Activated naive CD4-positive, alpha-beta T cell treated with anti-CD3 and anti-CD28 coated beads for 36 hours (primary cell): ENCODE measurements at regions of chr12 and their contacts with region 1.

Region 1: GRCh38 chr12:76037130-76038103 is 5.8 kb upstream of the PHLDA1 start:
- DNase-seq: peak; percentile 30
- H3K4me3 Mint-ChIP-seq: no peak overlapping the region
- H3K27ac Mint-ChIP-seq: no peak overlapping the region
- H3K4me1 Mint-ChIP-seq: peaks cover 18% of the 10 kb centered on the region
- H3K27me3 Mint-ChIP-seq: no peaks in the 10 kb centered on the region

Region 2: DNA sequence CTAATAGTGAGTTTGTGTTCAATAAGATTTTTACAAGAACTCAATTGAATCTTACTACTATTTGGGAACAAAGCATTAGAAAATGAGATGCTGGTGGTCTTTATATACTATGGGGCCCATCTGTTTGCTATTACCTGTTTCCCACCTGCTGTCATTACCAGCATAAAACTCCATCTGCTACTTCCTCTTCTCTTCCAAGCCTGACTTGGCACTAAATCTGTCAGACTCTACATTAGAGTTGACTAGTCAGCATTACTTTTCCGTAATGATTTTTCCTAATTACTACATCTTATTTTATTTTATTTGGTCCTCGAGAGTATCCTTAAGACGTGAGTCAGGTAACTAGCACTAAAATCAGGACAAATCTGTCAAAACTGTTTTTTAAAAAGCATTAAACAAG is 457.9 kb before region 1 on chr12:
- CTCF ChIA-PET with region 1: interaction called, 3 read pairs
- intact Hi-C with region 1: loop called (anchors 5 kb)
- DNase-seq: no peak
- H3K4me3 Mint-ChIP-seq: no peak overlapping the region
- H3K27ac Mint-ChIP-seq: no peak overlapping the region
- H3K4me1 Mint-ChIP-seq: no peaks in the 10 kb centered on the region
- H3K27me3 Mint-ChIP-seq: peaks cover 3% of the 10 kb centered on the region

Region 3: GRCh38 chr12:75814851-75815754 is 222.3 kb before region 1 on chr12:
- CTCF ChIA-PET with region 1: interaction called, 15 read pairs
- intact Hi-C with region 1: loop called (anchors 1 kb)
- DNase-seq: no peak
- H3K4me3 Mint-ChIP-seq: no peak overlapping the region
- H3K27ac Mint-ChIP-seq: no peak overlapping the region
- H3K4me1 Mint-ChIP-seq: no peaks in the 10 kb centered on the region
- H3K27me3 Mint-ChIP-seq: no peaks in the 10 kb centered on the region

Region 4: GRCh38 chr12:76310110-76310509 is 272.7 kb after region 1 on chr12:
- CTCF ChIA-PET with region 1: no interaction called
- intact Hi-C with region 1: no loop called
- DNase-seq: no peak
- H3K4me3 Mint-ChIP-seq: no peak overlapping the region
- H3K27ac Mint-ChIP-seq: no peak overlapping the region
- H3K4me1 Mint-ChIP-seq: no peaks in the 10 kb centered on the region
- H3K27me3 Mint-ChIP-seq: peaks cover 13% of the 10 kb centered on the region